ENCODE measurements at regions of chr12 and their contacts with region 1.

Region 1: DNA sequence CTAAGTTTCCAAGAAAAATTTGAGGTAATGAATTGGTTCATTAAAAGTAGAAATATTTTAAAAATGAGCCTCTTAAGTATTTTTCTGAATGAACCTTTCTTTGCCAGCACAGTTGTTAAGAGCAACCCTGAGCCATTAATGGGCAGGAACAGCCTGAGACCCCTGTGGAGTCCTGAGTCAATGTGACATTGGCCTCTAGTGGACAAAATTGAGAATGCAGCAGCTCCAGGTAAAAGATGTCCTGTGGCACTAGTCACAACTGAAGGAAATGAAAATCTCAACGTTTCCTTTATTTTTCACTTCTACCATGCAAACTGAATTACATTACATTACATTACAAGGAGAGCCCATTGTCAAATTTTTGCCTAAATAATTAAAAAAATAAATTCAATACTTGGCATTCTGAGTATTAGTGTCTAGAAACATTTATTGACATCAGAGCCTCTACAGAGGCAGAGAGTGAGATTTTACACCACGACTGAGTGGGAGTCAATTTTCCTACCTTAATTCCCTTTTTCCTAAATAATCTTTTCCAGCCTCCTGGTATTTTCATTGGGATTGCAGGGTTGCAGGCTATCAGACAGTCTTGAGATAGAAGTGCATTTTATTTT is 135.7 kb downstream of the PPM1H start:
- DNase-seq: peak; percentile 87
- H3K4me3 Mint-ChIP-seq: no peak overlapping the region
- H3K27ac Mint-ChIP-seq: no peak overlapping the region
- H3K4me1 Mint-ChIP-seq: no peaks in the 10 kb centered on the region
- H3K27me3 Mint-ChIP-seq: peaks cover 10% of the 10 kb centered on the region

Region 2: DNA sequence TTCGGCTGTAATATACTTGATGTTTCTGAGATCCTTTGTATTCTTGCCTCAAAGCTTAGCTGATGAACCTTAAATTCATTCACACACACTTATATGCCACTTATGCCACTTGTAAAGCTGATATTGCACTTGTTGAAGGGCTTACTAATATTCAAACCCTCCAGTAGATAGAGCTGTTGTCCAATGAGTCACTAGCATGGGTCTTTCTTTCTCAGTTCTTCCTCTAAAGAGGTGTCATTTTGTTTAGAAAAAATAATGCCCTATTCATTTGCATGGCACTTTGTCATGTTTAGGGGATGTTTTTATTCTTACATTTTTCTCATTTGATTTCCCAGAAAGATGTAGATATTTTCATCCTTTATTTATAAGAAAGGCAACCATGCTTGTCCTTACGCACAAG is 276.2 kb before region 1 on chr12:
- intact Hi-C with region 1: loop called (anchors 5 kb)
- DNase-seq: no peak
- H3K4me3 Mint-ChIP-seq: no peak overlapping the region
- H3K27ac Mint-ChIP-seq: no peak overlapping the region
- H3K4me1 Mint-ChIP-seq: peaks cover 23% of the 10 kb centered on the region
- H3K27me3 Mint-ChIP-seq: no peaks in the 10 kb centered on the region

Region 3: DNA sequence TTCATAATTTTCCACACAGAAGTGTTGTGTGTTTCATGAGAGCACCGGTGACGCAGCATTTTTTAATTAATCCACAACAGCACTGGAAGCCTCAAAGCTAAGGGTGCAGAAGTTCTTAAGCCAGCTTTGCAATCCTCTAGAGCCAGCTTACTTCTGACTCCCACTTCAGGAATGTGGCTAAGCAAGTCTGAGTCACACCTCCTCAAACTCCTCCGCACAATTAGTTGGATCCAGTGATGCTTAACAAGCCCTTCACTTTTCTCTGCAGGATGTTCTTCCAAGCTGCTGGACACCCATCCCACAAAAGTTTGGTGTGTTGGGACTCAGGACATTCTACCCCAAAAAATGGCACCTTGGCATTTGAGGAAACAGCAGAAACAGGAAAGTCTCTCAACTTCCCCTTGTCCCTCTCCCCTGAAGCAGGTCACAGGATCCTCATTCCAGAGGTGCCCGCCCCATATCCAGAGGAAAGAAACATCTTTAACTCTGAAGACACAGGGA is 74.2 kb before region 1 on chr12:
- intact Hi-C with region 1: loop called (anchors 10 kb)
- DNase-seq: no peak
- H3K4me3 Mint-ChIP-seq: no peak overlapping the region
- H3K27ac Mint-ChIP-seq: no peak overlapping the region
- H3K4me1 Mint-ChIP-seq: peaks cover 1% of the 10 kb centered on the region
- H3K27me3 Mint-ChIP-seq: peaks cover 4% of the 10 kb centered on the region

Measured in activated CD4-positive, alpha-beta T cell treated with anti-CD3 and anti-CD28 coated beads, Interleukin-2, amount 10 ng/mL, durations not matched to agents 24 days and 14 days (primary cell).